Activated CD8-positive, alpha-beta memory T cell treated with anti-CD3 and anti-CD28 coated beads, Interleukin-2, amount 10 ng/mL, durations not matched to agents 7 days and 5 days (primary cell): ENCODE measurements at regions of chr6 and their contacts with region 1.

Region 1: GRCh38 chr6:43308101-43308989 is at the start of gene CRIP3:
- DNase-seq: peak; percentile 65
- ATAC-seq: peak; percentile 93
- H3K4me3 Mint-ChIP-seq: peak within 1 kb of the TSS; percentile 70
- H3K27ac Mint-ChIP-seq: no peak within 1 kb of the TSS
- H3K4me1 Mint-ChIP-seq: peaks cover 12% of the 10 kb centered on the region
- H3K27me3 Mint-ChIP-seq: peaks cover 13% of the 10 kb centered on the region
- total RNA-seq, gene CRIP3: 0.50 to 0.66 TPM

Region 2: GRCh38 chr6:43211955-43212354 is 96.4 kb before region 1 on chr6:
- CTCF ChIA-PET with region 1: no interaction called
- DNase-seq: no peak
- ATAC-seq: no peak
- H3K4me3 Mint-ChIP-seq: no peak overlapping the region
- H3K27ac Mint-ChIP-seq: no peak overlapping the region
- H3K4me1 Mint-ChIP-seq: no peaks in the 10 kb centered on the region
- H3K27me3 Mint-ChIP-seq: no peaks in the 10 kb centered on the region

Region 3: GRCh38 chr6:43297644-43298564 is 10.4 kb before region 1 on chr6 and contains the start of gene SLC22A7:
- CTCF ChIA-PET with region 1: interaction called, 17 read pairs
- DNase-seq: no peak
- ATAC-seq: no peak
- H3K4me3 Mint-ChIP-seq: no peak within 1 kb of the TSS
- H3K27ac Mint-ChIP-seq: no peak within 1 kb of the TSS
- H3K4me1 Mint-ChIP-seq: no peaks in the 10 kb centered on the region
- H3K27me3 Mint-ChIP-seq: peaks cover 11% of the 10 kb centered on the region
- total RNA-seq, gene SLC22A7: not detected

Region 4: GRCh38 chr6:43377710-43378229 is 69.4 kb after region 1 on chr6:
- CTCF ChIA-PET with region 1: no interaction called
- DNase-seq: no peak
- ATAC-seq: no peak
- H3K4me3 Mint-ChIP-seq: no peak overlapping the region
- H3K27ac Mint-ChIP-seq: no peak overlapping the region
- H3K4me1 Mint-ChIP-seq: peaks cover 20% of the 10 kb centered on the region
- H3K27me3 Mint-ChIP-seq: peaks cover 20% of the 10 kb centered on the region

Region 5: GRCh38 chr6:43402820-43403219 is 94.5 kb after region 1 on chr6:
- CTCF ChIA-PET with region 1: interaction called, 13 read pairs
- DNase-seq: no peak
- ATAC-seq: no peak
- H3K4me3 Mint-ChIP-seq: no peak overlapping the region
- H3K27ac Mint-ChIP-seq: no peak overlapping the region
- H3K4me1 Mint-ChIP-seq: peaks cover 2% of the 10 kb centered on the region
- H3K27me3 Mint-ChIP-seq: peaks cover 25% of the 10 kb centered on the region